ENCODE measurements at regions of chr16 and their contacts with region 1.

Region 1: DNA sequence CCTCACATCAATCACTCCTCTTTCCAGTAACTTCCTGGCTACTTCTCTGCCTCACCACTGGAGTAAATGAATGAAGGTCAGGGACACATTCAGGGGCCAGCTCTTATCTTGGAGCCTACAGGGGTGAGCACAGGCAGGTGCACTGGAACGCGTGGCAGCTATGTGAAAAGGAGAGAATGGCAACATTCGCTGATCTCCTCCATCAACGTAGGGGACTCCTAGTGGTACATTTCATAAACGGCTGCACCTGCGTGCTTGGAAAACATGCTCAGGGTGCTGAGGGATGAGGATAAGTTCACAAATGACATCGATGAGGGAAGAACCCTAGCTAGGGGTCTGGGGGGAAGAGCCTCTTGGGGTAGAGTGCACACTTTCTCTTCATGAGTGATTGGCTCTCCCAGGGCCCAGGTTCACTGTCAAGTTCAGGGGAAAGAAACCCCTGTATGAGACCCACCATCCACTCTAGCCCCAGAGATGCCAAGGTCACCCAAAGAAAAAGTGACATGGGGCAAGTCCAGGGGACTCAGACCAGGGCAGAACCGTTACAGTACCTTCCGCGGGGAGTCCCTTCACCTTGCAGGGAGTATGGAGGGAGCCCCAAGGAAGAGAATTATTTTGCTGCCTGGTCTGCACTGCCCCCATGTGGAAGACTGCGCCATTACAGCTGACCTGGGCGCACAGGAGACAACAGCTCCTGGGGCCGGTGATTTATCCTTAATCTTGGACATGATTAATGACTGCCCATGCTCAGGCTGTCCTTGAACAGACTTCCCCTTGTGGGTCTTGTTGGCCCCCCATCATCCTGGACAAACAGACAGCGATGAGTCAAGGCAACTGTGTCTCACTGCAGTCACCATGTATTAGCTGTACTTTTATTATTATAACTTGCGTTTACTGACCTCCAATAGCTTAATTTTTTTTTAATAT is 30.1 kb downstream of the VAC14 start:
- DNase-seq: peak; percentile 86
- H3K4me3 Mint-ChIP-seq: no peak overlapping the region
- H3K27ac Mint-ChIP-seq: no peak overlapping the region
- H3K4me1 Mint-ChIP-seq: peaks cover 26% of the 10 kb centered on the region
- H3K27me3 Mint-ChIP-seq: no peaks in the 10 kb centered on the region
- CTCF ChIP-seq: peak; percentile 97

Region 2: DNA sequence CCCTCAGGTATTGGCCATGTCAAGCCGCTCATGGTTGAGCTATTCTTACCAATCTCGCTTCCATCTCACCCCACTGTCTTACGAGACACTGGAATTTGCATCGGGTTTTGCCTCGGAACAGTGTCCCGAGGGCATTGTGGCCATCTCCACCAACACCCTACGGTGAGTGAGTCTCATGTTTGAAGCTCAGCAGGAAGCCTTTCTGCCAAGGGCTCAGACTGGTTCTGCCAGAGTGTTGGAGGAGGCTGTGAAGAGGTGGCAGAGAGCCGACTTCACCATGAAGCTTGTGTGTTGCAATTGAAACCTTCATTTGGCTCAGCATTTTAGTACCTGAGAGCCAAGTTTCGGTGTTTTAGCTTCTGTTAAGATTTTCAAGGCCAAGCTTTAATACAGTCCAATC is 209.3 kb before region 1 on chr16:
- CTCF ChIA-PET with region 1: no interaction called
- intact Hi-C with region 1: loop called (anchors 10 kb)
- DNase-seq: no peak
- H3K4me3 Mint-ChIP-seq: no peak overlapping the region
- H3K27ac Mint-ChIP-seq: no peak overlapping the region
- H3K4me1 Mint-ChIP-seq: peaks cover 1% of the 10 kb centered on the region
- H3K27me3 Mint-ChIP-seq: no peaks in the 10 kb centered on the region
- CTCF ChIP-seq: no peak

Region 3: DNA sequence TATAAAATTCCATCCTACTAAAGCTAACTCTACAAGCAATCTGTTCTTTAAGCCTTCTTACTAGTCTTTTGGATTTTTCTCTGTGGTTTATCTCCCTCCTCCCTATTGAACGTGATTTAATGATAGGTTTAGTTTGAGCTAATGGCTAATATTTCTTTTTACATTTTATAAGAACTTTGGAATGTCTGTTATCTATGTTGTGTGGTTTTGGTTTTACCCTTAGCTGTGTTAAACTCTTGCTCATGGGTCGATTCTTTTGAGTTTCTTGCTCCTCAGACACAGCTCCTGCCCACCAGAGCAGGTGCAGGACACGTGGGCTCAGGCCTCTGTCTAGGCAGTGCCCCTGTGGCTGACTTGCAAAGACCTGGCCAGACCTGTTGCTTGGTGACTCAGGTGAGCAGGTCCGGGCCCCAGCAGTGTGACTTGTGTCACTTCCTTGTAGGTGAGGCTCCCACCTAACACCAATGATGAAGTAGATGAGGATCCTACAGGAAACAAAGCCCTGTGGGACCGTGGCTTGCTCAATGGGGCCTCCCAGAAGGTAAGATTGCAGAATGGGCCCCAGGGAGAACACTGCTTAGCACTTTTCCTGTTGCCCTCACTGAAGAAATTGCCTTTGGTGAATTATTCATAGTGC is 202.2 kb before region 1 on chr16:
- CTCF ChIA-PET with region 1: interaction called, 11 read pairs
- intact Hi-C with region 1: loop called (anchors 10 kb)
- DNase-seq: peak; percentile 89
- H3K4me3 Mint-ChIP-seq: peak overlapping the region; percentile 53
- H3K27ac Mint-ChIP-seq: peak overlapping the region; percentile 92
- H3K4me1 Mint-ChIP-seq: peaks cover 40% of the 10 kb centered on the region
- H3K27me3 Mint-ChIP-seq: no peaks in the 10 kb centered on the region
- CTCF ChIP-seq: no peak

Region 4: DNA sequence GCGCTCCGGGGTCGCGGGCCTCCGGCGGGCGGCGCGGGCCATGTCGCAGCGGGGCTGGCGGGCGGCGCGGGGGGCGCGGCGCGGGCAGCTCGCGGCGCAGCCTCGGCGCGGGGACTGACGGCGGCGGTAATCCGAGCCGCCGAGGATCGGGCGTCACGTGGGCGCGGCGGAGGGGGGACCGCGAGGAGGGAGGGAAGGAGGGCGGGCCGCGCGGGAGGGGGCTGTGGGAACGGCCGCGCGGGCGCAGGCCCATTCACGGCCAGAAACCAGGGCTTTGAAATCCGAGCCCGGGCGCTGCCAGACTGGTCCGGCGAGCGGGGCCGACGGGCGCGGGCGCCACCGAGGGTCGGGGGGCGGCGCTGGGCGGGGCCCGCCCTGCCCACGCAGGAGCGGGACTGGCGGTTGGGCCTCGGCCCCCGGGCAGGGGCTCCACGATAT is 84.9 kb before region 1 on chr16 and contains the start of gene MTSS2:
- CTCF ChIA-PET with region 1: interaction called, 3 read pairs
- intact Hi-C with region 1: loop called (anchors 10 kb)
- DNase-seq: peak; percentile 76
- H3K4me3 Mint-ChIP-seq: peak within 1 kb of the TSS; percentile 76
- H3K27ac Mint-ChIP-seq: peak within 1 kb of the TSS; percentile 77
- H3K4me1 Mint-ChIP-seq: peaks cover 14% of the 10 kb centered on the region
- H3K27me3 Mint-ChIP-seq: no peaks in the 10 kb centered on the region
- CTCF ChIP-seq: no peak
- total RNA-seq, gene MTSS2: 27.1 and 28.3 TPM in 2 replicates

Region 5: DNA sequence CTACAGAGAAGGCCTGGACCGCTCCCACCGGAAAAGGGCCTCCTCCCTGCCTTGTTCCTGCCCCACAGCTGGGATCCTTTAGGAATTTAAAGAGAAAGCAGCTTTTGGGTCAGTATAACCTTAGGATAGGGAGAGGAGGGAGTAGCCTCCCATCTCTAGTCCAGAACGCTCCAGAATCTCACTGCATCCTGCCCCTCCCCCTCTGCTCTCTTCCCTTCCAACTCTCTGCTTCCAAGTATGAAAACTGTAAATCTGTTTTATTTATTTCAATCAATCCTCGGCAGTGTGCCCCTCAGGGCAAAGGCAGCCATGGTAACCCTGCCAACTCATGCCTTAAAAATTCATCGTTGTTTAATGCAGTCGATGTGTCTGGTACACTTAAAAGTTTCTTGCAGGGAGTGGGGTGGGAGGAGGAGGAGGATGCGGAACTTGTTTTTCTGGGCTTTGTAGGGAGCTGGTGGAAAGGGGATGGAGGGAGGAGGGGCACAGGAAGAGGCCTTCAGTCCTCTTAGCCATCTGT is 63.9 kb before region 1 on chr16:
- CTCF ChIA-PET with region 1: no interaction called
- intact Hi-C with region 1: loop called (anchors 5 kb)
- DNase-seq: peak; percentile 61
- H3K4me3 Mint-ChIP-seq: no peak overlapping the region
- H3K27ac Mint-ChIP-seq: peak overlapping the region; percentile 32
- H3K4me1 Mint-ChIP-seq: peaks cover 33% of the 10 kb centered on the region
- H3K27me3 Mint-ChIP-seq: no peaks in the 10 kb centered on the region
- CTCF ChIP-seq: no peak

Region 6: GRCh38 chr16:70746708-70747424 is 24.0 kb before region 1 on chr16:
- CTCF ChIA-PET with region 1: interaction called, 11 read pairs
- intact Hi-C with region 1: no loop called
- DNase-seq: peak; percentile 94
- H3K4me3 Mint-ChIP-seq: peak overlapping the region; percentile 55
- H3K27ac Mint-ChIP-seq: peak overlapping the region; percentile 97
- H3K4me1 Mint-ChIP-seq: peaks cover 55% of the 10 kb centered on the region
- H3K27me3 Mint-ChIP-seq: no peaks in the 10 kb centered on the region
- CTCF ChIP-seq: no peak